Activated CD4-positive, alpha-beta T cell treated with anti-CD3 and anti-CD28 coated beads for 36 hours (primary cell): ENCODE measurements at regions of chr3 and their contacts with region 1.

Region 1: GRCh38 chr3:148366743-148367410 is 330.8 kb upstream of the AGTR1 start:
- DNase-seq: no peak
- ATAC-seq: no peak
- H3K4me3 Mint-ChIP-seq: no peak overlapping the region
- H3K27ac Mint-ChIP-seq: no peak overlapping the region
- H3K4me1 Mint-ChIP-seq: no peaks in the 10 kb centered on the region
- H3K27me3 Mint-ChIP-seq: no peaks in the 10 kb centered on the region

Region 2: GRCh38 chr3:148344522-148344921 is 22.4 kb before region 1 on chr3:
- CTCF ChIA-PET with region 1: no interaction called
- POLR2A ChIA-PET with region 1: no interaction called
- intact Hi-C with region 1: loop called in 1 of 2 experiments (anchors 2 kb)
- DNase-seq: no peak
- ATAC-seq: no peak
- H3K4me3 Mint-ChIP-seq: no peak overlapping the region
- H3K27ac Mint-ChIP-seq: no peak overlapping the region
- H3K4me1 Mint-ChIP-seq: no peaks in the 10 kb centered on the region
- H3K27me3 Mint-ChIP-seq: no peaks in the 10 kb centered on the region

Region 3: DNA sequence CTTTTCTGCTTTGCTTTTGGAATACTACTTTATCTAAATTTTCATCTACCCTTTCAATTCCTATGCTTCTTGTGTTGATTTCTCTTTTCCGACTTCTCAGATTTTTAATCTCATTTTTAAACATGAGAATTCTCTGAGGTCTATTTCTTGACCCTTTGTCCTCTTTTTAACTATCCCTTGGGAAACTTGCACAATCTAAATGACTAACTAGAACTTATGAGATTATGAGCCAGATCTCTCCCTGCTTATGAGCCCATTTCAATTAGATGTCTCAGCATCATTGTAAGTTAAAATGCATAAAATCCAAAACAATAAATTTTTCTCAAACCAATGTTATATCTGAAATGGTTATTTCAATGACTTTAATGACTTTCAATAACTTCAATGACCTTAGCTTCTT is 33.9 kb after region 1 on chr3:
- CTCF ChIA-PET with region 1: no interaction called
- POLR2A ChIA-PET with region 1: no interaction called
- intact Hi-C with region 1: no loop called
- DNase-seq: no peak
- ATAC-seq: no peak
- H3K4me3 Mint-ChIP-seq: no peak overlapping the region
- H3K27ac Mint-ChIP-seq: no peak overlapping the region
- H3K4me1 Mint-ChIP-seq: no peaks in the 10 kb centered on the region
- H3K27me3 Mint-ChIP-seq: no peaks in the 10 kb centered on the region

Region 4: GRCh38 chr3:148500881-148501280 is 134.0 kb after region 1 on chr3:
- CTCF ChIA-PET with region 1: no interaction called
- POLR2A ChIA-PET with region 1: no interaction called
- intact Hi-C with region 1: no loop called
- DNase-seq: no peak
- ATAC-seq: no peak
- H3K4me3 Mint-ChIP-seq: no peak overlapping the region
- H3K27ac Mint-ChIP-seq: no peak overlapping the region
- H3K4me1 Mint-ChIP-seq: no peaks in the 10 kb centered on the region
- H3K27me3 Mint-ChIP-seq: no peaks in the 10 kb centered on the region

Region 5: DNA sequence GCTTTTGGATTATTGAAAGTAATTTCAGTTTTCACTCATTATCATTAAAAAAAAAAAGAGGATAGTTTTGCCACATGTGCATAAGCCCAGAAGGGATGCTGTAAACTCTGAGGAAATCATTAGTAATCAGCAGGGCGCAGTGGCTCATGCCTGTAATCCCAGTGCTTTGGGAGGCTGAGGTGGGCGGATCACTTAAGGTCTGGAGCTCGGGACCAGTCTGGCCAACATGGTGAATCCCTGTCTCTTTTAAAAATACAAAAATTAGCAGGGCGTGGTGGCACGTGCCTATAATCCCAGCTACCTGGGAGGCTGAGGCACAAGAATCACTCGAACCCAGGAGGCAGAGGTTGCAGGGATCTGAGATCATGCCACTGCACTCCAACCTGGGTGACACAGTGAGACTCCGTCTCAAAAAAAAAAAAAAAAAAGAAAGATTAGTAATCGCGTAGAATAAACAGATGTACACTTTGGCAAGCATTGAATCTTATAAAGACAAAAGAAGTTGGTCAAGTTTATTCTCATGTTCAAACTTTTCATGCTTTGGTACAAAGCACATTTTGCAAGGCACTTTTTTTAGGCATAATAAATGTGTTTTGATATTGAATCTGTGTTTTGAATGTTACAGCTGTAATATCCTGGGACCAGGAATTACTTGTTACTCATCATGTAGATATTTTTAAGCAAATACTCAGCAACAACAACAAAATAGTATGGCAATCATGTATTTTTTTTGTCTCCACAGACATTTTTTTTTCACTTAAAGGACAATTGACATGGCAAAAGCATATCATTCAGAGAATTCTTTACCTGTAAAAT is 237.6 kb after region 1 on chr3:
- CTCF ChIA-PET with region 1: no interaction called
- POLR2A ChIA-PET with region 1: no interaction called
- intact Hi-C with region 1: no loop called
- DNase-seq: no peak
- ATAC-seq: no peak
- H3K4me3 Mint-ChIP-seq: no peak overlapping the region
- H3K27ac Mint-ChIP-seq: no peak overlapping the region
- H3K4me1 Mint-ChIP-seq: no peaks in the 10 kb centered on the region
- H3K27me3 Mint-ChIP-seq: no peaks in the 10 kb centered on the region